Body of pancreas (tissue), 4 donors: ENCODE measurements at regions of chr1 and their contacts with region 1.

Region 1: GRCh38 chr1:21368515-21369289 is 71.2 kb upstream of the NBPF3 start:
- DNase-seq: peak; percentile 80 to 85 (median 84)
- ATAC-seq: peak; percentile 94
- H3K4me3 ChIP-seq: no peak overlapping the region
- H3K27ac ChIP-seq: no peak overlapping the region
- H3K4me1 ChIP-seq: peaks cover 11% of the 10 kb centered on the region
- H3K27me3 ChIP-seq: no peaks in the 10 kb centered on the region
- CTCF ChIP-seq: peak; percentile 96 to 100 (median 99)
- POLR2A ChIP-seq: no peak

Region 2: GRCh38 chr1:21232044-21232443 is 136.7 kb before region 1 on chr1:
- intact Hi-C with region 1: loop called (anchors 5 kb)
- DNase-seq: peak; percentile 54 to 67 (median 62)
- ATAC-seq: peak; percentile 82
- H3K4me3 ChIP-seq: no peak overlapping the region
- H3K27ac ChIP-seq: no peak overlapping the region
- H3K4me1 ChIP-seq: peaks cover 3% of the 10 kb centered on the region
- H3K27me3 ChIP-seq: no peaks in the 10 kb centered on the region
- CTCF ChIP-seq: peak; percentile 47 to 93 (median 87)
- POLR2A ChIP-seq: no peak

Region 3: DNA sequence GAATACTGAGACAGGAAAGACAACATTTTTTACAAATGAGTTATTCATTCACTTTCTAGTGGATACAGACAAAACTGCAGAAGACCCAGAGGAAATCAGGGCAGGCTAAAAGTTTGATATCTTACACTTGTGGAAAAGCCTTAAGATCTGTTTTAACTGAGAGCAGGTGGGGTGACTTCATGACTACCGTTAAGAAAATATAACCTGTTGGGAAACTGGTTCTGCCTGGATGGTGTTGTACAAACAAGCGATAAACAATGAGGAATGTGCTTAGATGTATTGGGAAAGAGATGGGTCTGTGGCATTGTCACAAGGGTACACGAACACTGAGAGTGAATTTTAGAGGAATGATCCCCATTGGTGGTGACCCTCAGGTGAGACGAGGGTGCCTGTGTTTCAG is 99.3 kb after region 1 on chr1:
- intact Hi-C with region 1: no loop called
- DNase-seq: no peak
- ATAC-seq: no peak
- H3K4me3 ChIP-seq: no peak overlapping the region
- H3K27ac ChIP-seq: no peak overlapping the region
- H3K4me1 ChIP-seq: no peaks in the 10 kb centered on the region
- H3K27me3 ChIP-seq: no peaks in the 10 kb centered on the region
- CTCF ChIP-seq: no peak
- POLR2A ChIP-seq: no peak

Region 4: GRCh38 chr1:21764615-21765423 is 396.1 kb after region 1 on chr1:
- intact Hi-C with region 1: no loop called
- DNase-seq: peak; percentile 68 to 80 (median 72)
- ATAC-seq: peak; percentile 94
- H3K4me3 ChIP-seq: no peak overlapping the region
- H3K27ac ChIP-seq: peak overlapping the region; percentile 40 to 78 (median 64)
- H3K4me1 ChIP-seq: peaks cover 37% of the 10 kb centered on the region
- H3K27me3 ChIP-seq: no peaks in the 10 kb centered on the region
- CTCF ChIP-seq: no peak
- POLR2A ChIP-seq: no peak